Calu3 (cell line): ENCODE measurements at regions of chr9 and their contacts with region 1.

Region 1: DNA sequence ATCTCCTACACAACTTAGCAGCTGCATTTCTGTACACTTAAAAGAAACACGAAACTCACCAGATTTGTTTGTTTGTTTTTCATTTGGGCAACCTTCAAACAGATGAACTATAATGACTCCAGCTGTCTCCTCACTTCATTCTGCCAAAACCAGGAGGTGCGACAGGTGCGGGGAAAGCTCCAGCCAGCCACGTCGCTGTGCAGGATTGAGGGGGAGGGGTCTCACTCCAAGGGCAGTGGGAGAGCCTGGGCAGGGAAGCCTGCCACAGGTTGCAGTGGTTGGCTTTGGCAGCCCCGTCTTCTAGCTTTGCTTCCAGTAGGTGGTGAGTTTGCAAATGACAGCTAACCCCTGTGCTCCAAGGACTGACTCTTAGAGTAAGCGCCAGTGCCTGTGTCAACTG is 215.8 kb downstream of the CEMIP2 start:
- DNase-seq: peak; percentile 9
- H3K4me3 Mint-ChIP-seq: no peak overlapping the region
- H3K27ac Mint-ChIP-seq: no peak overlapping the region
- H3K4me1 Mint-ChIP-seq: peaks cover 9% of the 10 kb centered on the region
- H3K27me3 Mint-ChIP-seq: no peaks in the 10 kb centered on the region
- CTCF ChIP-seq: no peak

Region 2: DNA sequence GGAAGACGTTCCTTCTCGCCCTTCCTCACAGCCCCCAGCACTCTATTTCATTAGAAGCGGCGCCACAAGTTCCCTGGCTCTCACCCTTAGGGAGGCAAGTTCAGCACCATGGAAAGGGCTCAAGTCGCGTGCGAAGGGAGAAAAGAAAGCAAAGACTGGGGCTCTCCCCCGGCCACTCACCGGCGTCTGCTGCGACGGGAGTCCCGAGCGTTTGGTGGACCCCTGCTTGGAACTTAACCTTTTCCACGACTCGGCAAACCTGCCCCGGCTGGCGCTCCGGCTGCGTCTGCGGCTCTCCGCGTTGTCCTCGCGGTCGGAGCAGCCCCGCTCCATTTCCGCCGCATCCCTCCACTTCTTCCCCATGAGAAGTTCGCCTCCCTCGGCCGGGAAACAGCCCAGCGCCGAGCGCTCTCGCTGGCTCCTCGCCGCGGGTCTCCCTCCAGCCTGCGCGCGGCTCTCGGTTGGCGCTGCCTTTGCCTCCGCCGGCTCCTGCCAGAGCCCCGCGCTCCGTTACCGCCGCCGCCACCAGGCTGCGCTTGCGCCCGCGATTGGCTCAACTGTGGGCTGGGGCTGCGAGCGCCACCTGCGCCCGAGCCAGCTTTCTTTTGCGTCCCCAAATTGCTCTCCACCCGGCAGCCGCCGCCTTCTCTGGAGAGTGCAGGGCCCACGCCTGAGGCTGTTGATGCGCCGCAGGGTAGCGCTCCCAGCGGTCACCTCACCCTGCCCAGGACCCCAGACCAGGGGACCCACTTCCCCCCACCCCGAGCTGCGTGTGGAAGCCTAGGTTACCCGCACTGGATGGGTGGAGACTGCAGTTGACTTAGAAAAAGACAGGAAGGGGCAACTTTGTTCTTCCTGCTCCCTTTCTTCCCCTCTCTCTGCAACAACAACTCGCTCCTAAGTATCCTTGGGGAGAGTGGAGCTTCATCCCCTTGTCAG is 105.7 kb before region 1 on chr9:
- CTCF ChIA-PET with region 1: no interaction called
- intact Hi-C with region 1: loop called (anchors 10 kb)
- DNase-seq: peak; percentile 65
- H3K4me3 Mint-ChIP-seq: peak overlapping the region; percentile 73
- H3K27ac Mint-ChIP-seq: no peak overlapping the region
- H3K4me1 Mint-ChIP-seq: no peaks in the 10 kb centered on the region
- H3K27me3 Mint-ChIP-seq: peaks cover 55% of the 10 kb centered on the region
- CTCF ChIP-seq: peak; percentile 20